WTC11 (cell line): ENCODE measurements at regions of chr3 and their contacts with region 1.

Region 1: DNA sequence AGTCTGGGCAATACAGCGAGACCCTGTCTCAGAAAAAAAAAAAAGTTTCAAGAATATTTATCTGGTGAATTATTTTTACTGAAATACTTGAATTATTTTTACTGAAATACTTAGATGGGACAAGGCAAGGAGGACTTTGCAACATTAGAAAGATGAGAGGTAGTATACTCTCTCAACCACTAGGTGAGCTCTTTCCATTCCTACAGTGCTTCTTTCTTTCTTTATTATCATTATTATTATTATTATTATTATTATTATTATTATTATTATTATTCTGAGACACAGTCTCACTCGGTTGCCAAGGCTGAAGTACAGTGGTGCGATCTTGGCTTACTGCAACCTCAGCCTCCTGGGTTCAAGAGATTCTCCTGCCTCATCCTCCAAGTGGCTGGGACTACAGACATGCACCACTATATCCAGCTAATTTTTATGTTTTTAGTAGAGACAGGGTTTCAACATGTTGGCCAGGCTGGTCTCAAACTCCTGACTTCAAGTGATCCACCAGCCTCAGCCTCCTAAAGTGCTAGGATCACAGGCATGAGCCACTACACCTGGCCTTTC is 468.8 kb downstream of the MAGI1 start:
- DNase-seq: no peak
- ATAC-seq: no peak
- H3K4me3 Mint-ChIP-seq: no peak overlapping the region
- H3K27ac Mint-ChIP-seq: no peak overlapping the region
- H3K4me1 Mint-ChIP-seq: peaks cover 3% of the 10 kb centered on the region
- H3K27me3 Mint-ChIP-seq: no peaks in the 10 kb centered on the region
- CTCF ChIP-seq: peak; percentile 44; the same call in 1 of the 2 replicates

Region 2: GRCh38 chr3:65587650-65588439 is 17.9 kb after region 1 on chr3:
- CTCF ChIA-PET with region 1: interaction called, 12 read pairs
- POLR2A ChIA-PET with region 1: no interaction called
- DNase-seq: no peak
- ATAC-seq: peak; percentile 70
- H3K4me3 Mint-ChIP-seq: peak overlapping the region; percentile 22; the same call in 1 of the 2 replicates
- H3K27ac Mint-ChIP-seq: peak overlapping the region; percentile 23
- H3K4me1 Mint-ChIP-seq: peaks cover 77% of the 10 kb centered on the region
- H3K27me3 Mint-ChIP-seq: no peaks in the 10 kb centered on the region
- CTCF ChIP-seq: no peak

Region 3: GRCh38 chr3:65597226-65597951 is 27.5 kb after region 1 on chr3:
- CTCF ChIA-PET with region 1: interaction called, 13 read pairs
- POLR2A ChIA-PET with region 1: interaction called, 4 read pairs
- DNase-seq: peak; percentile 82
- ATAC-seq: peak; percentile 75
- H3K4me3 Mint-ChIP-seq: peak overlapping the region; percentile 85
- H3K27ac Mint-ChIP-seq: peak overlapping the region; percentile 96
- H3K4me1 Mint-ChIP-seq: peaks cover 58% of the 10 kb centered on the region
- H3K27me3 Mint-ChIP-seq: peaks cover 3% of the 10 kb centered on the region; the same call in 1 of the 2 replicates
- CTCF ChIP-seq: no peak